ENCODE measurements at regions of chr10 and their contacts with region 1.

Region 1: DNA sequence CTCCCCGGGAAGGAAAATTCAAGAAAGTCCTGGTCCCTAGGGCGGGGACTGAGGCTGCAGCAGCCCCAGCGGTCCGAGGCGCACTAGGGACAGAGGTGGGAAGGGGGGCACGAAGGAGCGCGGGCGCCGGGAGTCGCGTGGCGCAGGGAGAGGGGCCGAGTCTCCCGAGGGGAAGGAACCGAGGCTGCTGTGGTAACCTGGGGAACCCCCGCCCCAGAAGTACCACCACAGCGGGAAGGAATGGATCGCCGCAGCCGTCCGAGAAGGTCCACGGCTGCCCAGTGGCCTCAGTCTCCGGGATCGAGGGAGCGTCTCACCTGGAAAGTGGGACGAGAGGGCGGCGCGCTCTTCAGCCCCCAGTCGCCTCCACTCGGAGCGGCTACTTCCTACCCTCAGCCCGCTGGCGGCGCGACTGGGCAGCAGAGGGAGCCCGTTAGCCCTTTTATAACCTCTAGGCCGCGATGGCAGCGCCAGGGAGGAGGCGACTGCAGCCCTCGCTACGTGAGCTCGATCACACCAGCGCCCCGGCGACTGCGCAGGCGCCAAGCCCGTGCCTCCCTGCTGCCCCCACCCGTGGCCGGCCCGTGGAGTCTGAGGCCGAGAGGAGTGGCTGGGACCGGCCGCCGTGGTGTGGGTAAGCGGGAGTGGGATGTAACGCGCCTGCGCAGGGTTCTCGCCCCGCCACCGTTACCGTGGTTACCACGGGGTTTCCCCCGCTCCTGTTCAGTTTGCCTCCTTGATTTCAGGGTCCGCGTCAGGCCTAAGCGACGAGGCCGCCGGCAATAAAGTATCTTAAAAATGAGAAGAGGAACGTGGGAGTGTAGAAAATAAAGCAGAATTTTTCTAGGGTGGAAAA is at the start of gene P4HA1:
- DNase-seq: peak; percentile 100
- ATAC-seq: peak; percentile 90
- H3K4me3 ChIP-seq: peak within 1 kb of the TSS; percentile 64
- H3K27ac ChIP-seq: peak within 1 kb of the TSS; percentile 34
- H3K4me1 ChIP-seq: peaks cover 20% of the 10 kb centered on the region
- H3K27me3 ChIP-seq: no peaks in the 10 kb centered on the region
- CTCF ChIP-seq: peak; percentile 99
- total RNA-seq, gene P4HA1: 164 and 181 TPM in 2 replicates

Region 2: GRCh38 chr10:72692057-72692910 is 404.4 kb before region 1 on chr10 and contains the start of gene MCU:
- CTCF ChIA-PET with region 1: no interaction called
- POLR2A ChIA-PET with region 1: interaction called, 21 read pairs
- intact Hi-C with region 1: no loop called
- DNase-seq: peak; percentile 89
- ATAC-seq: peak; percentile 88
- H3K4me3 ChIP-seq: peak within 1 kb of the TSS; percentile 94
- H3K27ac ChIP-seq: no peak within 1 kb of the TSS; the same call in 1 of the 2 replicates
- H3K4me1 ChIP-seq: peaks cover 49% of the 10 kb centered on the region
- H3K27me3 ChIP-seq: no peaks in the 10 kb centered on the region
- CTCF ChIP-seq: no peak
- total RNA-seq, gene MCU: 16.4 and 21.5 TPM in 2 replicates

Region 3: DNA sequence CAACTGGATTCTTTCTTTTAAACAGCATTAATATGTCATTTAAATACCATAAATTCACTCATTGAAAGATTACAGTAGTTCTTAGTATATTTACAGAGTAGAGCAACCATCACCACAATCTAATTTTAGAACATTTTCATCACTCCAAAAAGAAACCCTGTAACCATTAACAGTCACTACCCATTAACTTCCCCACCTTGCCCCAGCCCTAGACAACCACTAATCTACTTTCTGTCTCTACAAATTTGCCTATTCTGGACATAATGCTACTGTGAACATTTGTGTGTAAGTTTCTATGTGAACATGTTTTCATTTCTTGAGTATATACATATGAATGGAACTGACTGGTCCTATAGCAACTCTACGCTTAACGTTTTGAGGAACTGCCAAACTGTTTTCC is 42.4 kb before region 1 on chr10:
- CTCF ChIA-PET with region 1: interaction called, 5 read pairs
- POLR2A ChIA-PET with region 1: interaction called, 11 read pairs
- intact Hi-C with region 1: no loop called
- DNase-seq: no peak
- ATAC-seq: no peak
- H3K4me3 ChIP-seq: no peak overlapping the region
- H3K27ac ChIP-seq: no peak overlapping the region
- H3K4me1 ChIP-seq: no peaks in the 10 kb centered on the region
- H3K27me3 ChIP-seq: no peaks in the 10 kb centered on the region
- CTCF ChIP-seq: no peak

Region 4: DNA sequence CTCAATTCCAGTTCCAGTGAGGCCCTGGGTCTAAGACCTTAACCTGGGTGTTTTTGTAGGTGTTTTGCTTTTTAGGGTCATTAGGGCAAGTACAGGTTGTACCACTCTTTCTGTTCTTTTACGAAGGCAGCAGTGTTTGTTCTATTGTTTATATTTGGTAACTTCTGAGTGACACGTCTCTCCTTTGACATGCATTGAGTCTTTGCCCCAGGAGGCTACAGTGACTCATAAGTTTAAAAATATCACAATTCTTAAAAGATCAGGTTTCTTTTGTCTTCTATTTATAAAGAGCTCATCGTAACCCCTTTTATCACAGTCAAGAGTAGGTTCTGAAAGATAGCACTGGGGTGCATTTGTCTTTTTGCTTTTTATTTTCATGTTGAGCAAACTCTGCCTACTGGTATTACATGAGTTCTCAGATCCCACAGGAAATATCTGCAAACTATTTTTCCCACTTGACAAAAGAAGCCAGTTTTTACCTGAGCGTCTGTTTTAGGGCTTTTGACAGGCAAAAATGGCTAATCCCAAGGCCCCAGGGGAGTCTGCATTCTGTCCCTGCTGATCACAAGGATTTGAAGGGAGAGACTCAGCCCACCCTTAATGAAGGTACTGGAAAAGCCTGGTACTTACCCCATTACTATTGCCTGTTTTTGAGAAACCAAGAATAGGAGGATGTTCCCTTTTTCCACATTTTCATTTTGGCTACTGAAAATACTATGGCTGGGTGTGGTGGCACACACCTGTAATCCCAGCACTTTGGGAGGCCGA is 21.5 kb after region 1 on chr10:
- CTCF ChIA-PET with region 1: interaction called, 20 read pairs
- POLR2A ChIA-PET with region 1: interaction called, 15 read pairs
- intact Hi-C with region 1: loop called (anchors 1 kb)
- DNase-seq: peak; percentile 99
- ATAC-seq: peak; percentile 87
- H3K4me3 ChIP-seq: peak overlapping the region; percentile 45
- H3K27ac ChIP-seq: peak overlapping the region; percentile 81
- H3K4me1 ChIP-seq: peaks cover 59% of the 10 kb centered on the region
- H3K27me3 ChIP-seq: no peaks in the 10 kb centered on the region
- CTCF ChIP-seq: no peak

Region 5: GRCh38 chr10:73167783-73168464 is 71.2 kb after region 1 on chr10 and contains the starts of genes ECD and FAM149B1:
- CTCF ChIA-PET with region 1: interaction called, 19 read pairs
- POLR2A ChIA-PET with region 1: interaction called, 9 read pairs
- intact Hi-C with region 1: loop called (anchors 2 kb)
- DNase-seq: peak; percentile 100
- ATAC-seq: peak; percentile 93
- H3K4me3 ChIP-seq: peak within 1 kb of the TSS; percentile 76
- H3K27ac ChIP-seq: peak within 1 kb of the TSS; percentile 51
- H3K4me1 ChIP-seq: peaks cover 21% of the 10 kb centered on the region
- H3K27me3 ChIP-seq: no peaks in the 10 kb centered on the region
- CTCF ChIP-seq: peak; percentile 49; the same call in 1 of the 2 replicates
- total RNA-seq, gene ECD: 103 and 108 TPM in 2 replicates
- total RNA-seq, gene FAM149B1: 34.3 and 39.1 TPM in 2 replicates

Region 6: GRCh38 chr10:73252445-73253224 is 156.0 kb after region 1 on chr10 and contains the start of gene MRPS16:
- CTCF ChIA-PET with region 1: interaction called, 13 read pairs
- POLR2A ChIA-PET with region 1: interaction called, 16 read pairs
- intact Hi-C with region 1: no loop called
- DNase-seq: peak; percentile 100
- ATAC-seq: peak; percentile 86
- H3K4me3 ChIP-seq: peak within 1 kb of the TSS; percentile 76
- H3K27ac ChIP-seq: peak within 1 kb of the TSS; percentile 80
- H3K4me1 ChIP-seq: peaks cover 37% of the 10 kb centered on the region
- H3K27me3 ChIP-seq: no peaks in the 10 kb centered on the region
- CTCF ChIP-seq: no peak
- total RNA-seq, gene MRPS16: 230 and 275 TPM in 2 replicates

Measured in PC-3 (cell line).